ENCODE measurements at regions of chr10 and their contacts with region 1.

Region 1: GRCh38 chr10:118568327-118568848 is 27.1 kb downstream of the PRLHR start:
- DNase-seq: no peak
- ATAC-seq: peak; percentile 62

Region 2: DNA sequence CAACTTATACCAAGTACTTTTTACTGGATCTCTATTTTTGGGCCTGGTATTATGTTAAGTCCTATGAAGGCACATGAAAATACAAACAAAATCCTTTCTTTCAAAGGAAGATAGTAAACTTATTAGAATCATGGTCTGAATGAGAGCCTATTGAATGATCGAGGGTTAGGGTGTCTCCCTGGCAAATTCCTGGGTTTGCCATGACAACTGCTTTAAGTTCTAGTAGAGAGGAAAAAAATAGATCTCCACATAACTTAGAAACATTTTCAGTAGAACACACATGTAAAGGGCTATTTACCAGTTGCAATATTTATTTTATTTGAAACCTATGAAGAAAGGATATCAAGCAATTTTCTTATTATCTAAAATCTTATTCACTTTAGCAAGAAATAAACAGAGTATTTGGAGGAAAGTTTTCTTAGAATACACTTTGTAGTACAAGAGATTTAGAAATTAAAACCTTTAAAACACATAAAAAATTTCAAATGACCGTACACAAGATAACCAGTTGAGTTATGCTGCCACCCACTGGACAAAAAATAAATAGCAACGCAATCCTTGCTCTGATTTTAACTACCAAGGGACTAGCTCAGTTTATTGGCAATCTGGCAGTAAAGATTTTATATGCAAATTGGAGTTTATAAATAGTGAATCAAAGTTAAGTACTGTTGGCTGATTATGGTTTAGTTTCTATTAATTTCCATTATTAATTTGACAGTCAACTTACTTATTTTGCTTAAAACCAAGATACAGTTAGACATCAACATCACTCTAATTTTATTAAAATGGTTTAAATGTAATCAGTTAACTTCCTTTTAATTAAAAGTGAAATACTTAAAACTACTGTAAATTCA is 152.5 kb after region 1 on chr10:
- intact Hi-C with region 1: loop called (anchors 1 kb)
- DNase-seq: no peak
- ATAC-seq: no peak

Region 3: DNA sequence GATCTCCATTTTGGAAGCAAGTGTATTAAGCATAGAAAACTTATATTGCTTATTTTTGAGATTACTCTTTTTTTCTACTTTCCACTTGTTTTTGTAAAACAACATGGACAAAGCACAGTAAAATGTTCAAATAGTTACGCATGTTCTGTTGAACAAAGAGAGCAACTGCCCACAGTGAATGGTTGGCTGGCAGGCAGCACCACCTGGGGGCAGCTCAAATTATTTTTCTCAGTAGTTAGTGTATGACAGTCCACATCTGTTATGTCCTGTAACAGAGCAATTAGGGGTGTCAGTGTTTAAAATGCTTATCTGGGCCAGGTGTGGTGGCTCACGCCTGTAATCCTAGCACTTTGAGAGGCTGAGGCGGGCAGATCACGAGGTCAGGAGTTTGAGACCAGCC is 232.5 kb after region 1 on chr10:
- intact Hi-C with region 1: loop called (anchors 1 kb)
- DNase-seq: no peak
- ATAC-seq: peak; percentile 68